ENCODE measurements at regions of chr15 and their contacts with region 1.

Region 1: DNA sequence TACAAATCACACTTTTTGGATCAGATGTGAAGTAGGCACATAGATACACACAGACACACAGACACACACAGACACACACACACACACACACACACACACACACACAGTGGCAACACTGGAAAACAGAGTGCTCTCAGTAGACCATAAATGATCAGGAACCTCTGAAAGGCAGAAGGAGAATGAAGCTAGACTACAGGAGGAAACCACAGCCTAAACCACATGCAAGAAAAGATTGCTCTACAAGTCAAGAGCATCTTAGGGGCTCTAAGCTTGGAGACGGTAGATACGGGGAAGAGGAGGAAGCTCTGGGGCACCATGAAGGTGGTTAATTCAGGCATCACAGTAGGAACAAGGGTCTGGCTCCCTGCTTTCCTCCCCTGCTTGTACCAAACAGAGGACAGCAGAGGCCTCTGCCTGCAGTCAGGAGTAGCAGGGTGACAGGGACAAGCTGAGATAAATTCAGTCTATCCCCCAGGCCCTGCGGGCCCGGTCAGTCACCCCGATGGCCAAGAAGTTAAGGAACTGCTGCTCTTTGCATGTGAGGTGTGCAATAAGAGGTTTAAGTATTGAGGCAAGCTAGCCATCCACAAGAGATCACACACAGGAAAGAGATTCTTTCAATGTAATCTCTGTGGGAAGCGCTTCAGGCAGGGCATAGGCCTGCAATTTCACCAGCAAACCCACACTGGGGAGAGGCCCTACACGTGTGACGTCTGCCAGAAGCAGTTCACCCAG is 23.5 kb upstream of the ARPIN start:
- DNase-seq: no peak
- ATAC-seq: no peak
- H3K4me3 ChIP-seq: no peak overlapping the region
- H3K27ac ChIP-seq: no peak overlapping the region
- H3K4me1 ChIP-seq: no peaks in the 10 kb centered on the region
- H3K27me3 ChIP-seq: peaks cover 21% of the 10 kb centered on the region
- CTCF ChIP-seq: no peak
- POLR2A ChIP-seq: no peak
- RAD21 ChIP-seq: no peak

Region 2: DNA sequence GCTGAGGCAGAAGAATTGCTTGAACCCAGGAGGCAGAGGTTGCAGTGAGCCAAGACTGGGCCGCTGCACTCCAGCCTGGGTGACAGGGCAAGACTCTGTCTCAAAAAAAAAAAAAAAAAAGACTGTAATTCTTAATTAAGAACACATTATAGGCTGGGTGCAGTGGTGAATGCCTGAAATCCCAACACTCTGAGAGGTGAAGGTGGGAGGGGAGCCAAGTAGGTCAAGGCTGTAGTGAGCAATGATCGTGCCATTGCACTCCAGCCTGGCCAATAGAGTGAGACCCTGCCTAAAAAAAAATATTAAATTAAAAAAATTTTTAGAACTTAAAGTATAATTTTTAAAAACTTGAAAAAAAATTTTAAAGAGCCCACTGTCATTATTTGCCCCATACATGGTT is 10.1 kb before region 1 on chr15:
- CTCF ChIA-PET with region 1: no interaction called
- POLR2A ChIA-PET with region 1: interaction called, 10 read pairs
- dilution Hi-C with region 1: no loop called
- in situ Hi-C with region 1: no loop called
- intact Hi-C with region 1: no loop called
- DNase-seq: no peak
- ATAC-seq: no peak
- H3K4me3 ChIP-seq: no peak overlapping the region
- H3K27ac ChIP-seq: no peak overlapping the region
- H3K4me1 ChIP-seq: no peaks in the 10 kb centered on the region
- H3K27me3 ChIP-seq: peaks cover 15% of the 10 kb centered on the region
- CTCF ChIP-seq: no peak
- POLR2A ChIP-seq: no peak
- RAD21 ChIP-seq: no peak

Region 3: GRCh38 chr15:89971592-89971997 is 35.4 kb after region 1 on chr15:
- CTCF ChIA-PET with region 1: no interaction called
- POLR2A ChIA-PET with region 1: no interaction called
- dilution Hi-C with region 1: no loop called
- in situ Hi-C with region 1: no loop called
- intact Hi-C with region 1: loop called (anchors 5 kb)
- DNase-seq: peak; percentile 52
- ATAC-seq: peak; percentile 93
- H3K4me3 ChIP-seq: no peak overlapping the region
- H3K27ac ChIP-seq: no peak overlapping the region
- H3K4me1 ChIP-seq: no peaks in the 10 kb centered on the region
- H3K27me3 ChIP-seq: peaks cover 16% of the 10 kb centered on the region
- CTCF ChIP-seq: peak; percentile 63
- POLR2A ChIP-seq: no peak
- RAD21 ChIP-seq: peak; percentile 49

Region 4: DNA sequence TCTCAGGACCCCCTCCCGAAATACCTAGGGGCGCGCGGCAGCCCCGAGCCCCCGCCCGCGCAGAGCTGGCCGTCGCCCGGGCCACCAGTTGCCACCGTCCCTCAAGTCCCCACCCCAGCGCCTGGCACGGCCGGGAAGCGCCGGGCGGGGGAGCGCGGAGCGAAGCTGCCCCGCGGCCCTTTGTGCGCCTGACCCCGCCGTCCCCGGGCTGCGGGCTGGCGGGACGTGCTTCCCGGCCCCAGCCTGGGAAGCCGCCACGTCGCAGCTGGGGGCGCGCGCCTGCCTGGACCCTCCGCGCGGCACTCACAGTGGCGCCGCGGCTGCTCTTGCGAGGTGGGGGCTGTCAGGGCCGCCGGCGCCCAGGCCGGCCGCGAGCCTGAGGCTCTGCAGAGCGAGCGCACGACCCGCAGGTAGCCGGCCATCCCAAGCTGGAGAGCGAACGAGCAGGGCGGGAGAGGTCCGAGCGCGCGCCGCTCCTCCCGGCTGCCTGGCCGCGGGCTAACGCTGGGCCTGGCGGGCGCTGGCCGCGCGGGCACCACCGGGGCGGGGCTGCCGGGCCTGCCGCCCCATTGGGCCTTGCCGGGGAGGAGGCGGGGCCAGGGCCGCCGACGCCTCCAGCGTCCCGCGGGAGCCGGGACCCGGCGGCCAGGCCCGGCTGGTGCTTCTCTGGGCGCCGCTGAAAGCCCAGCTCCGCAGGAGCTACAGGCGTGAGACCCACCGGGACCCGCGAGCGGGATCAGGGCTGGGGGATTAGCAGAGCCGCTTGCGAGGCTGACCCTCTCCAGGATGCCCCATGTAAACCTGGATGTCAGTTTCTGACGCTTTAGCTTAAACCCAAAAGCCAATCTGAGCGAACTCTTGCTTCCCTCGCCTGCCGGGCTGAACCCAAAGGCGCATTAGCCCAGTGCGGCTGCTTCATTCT is 166.0 kb after region 1 on chr15 and contains the start of gene IDH2:
- CTCF ChIA-PET with region 1: no interaction called
- POLR2A ChIA-PET with region 1: no interaction called
- dilution Hi-C with region 1: no loop called
- in situ Hi-C with region 1: no loop called
- intact Hi-C with region 1: no loop called
- DNase-seq: peak; percentile 79
- ATAC-seq: peak; percentile 90
- H3K4me3 ChIP-seq: peak within 1 kb of the TSS; percentile 93
- H3K27ac ChIP-seq: peak within 1 kb of the TSS; percentile 58
- H3K4me1 ChIP-seq: peaks cover 31% of the 10 kb centered on the region
- H3K27me3 ChIP-seq: no peaks in the 10 kb centered on the region
- CTCF ChIP-seq: no peak
- POLR2A ChIP-seq: peak; percentile 93
- RAD21 ChIP-seq: no peak
- total RNA-seq, gene IDH2: 87.2 and 118 TPM in 2 replicates